Activated naive CD4-positive, alpha-beta T cell treated with anti-CD3 and anti-CD28 coated beads for 36 hours (primary cell): ENCODE measurements at regions of chr1 and their contacts with region 1.

Region 1: GRCh38 chr1:66436378-66437145 is 97.4 kb upstream of the SGIP1 start:
- DNase-seq: peak; percentile 81
- H3K4me3 Mint-ChIP-seq: no peak overlapping the region
- H3K27ac Mint-ChIP-seq: no peak overlapping the region
- H3K4me1 Mint-ChIP-seq: peaks cover 40% of the 10 kb centered on the region
- H3K27me3 Mint-ChIP-seq: peaks cover 2% of the 10 kb centered on the region

Region 2: DNA sequence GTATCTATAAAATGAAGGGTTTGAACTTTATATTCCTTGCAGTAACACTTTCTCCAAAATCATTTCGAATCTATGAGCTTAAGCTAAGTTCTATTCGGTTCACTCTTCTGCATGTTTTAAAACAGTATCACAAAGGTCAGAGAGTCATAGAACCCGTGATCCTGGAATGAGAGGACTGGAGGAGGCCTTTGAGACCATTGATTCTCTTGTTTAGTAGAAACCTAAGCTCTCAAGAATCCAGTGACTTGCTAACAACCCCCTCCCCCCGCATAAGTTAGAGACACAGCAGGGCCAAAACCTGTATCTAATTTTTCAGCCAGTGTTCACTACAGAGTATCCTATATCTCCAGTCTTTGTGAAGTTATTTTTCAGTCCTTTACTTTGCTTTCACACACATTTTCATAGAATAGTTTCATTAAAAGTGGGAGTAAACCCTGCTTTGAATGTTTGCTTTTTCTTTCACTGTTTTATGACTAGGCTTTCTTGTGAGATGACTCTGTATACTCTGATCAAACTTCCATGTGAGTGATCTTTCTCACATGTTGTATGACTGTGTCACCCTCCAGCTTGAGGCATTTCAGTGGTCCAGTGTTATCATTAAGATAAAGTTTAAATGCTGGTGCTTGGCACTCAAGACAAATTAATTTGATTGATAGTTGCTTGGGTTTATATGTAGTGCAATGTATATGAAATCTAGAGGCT is 178.0 kb before region 1 on chr1:
- CTCF ChIA-PET with region 1: interaction called, 474 read pairs
- intact Hi-C with region 1: loop called (anchors 1 kb)
- DNase-seq: peak; percentile 43
- H3K4me3 Mint-ChIP-seq: no peak overlapping the region
- H3K27ac Mint-ChIP-seq: peak overlapping the region; percentile 3
- H3K4me1 Mint-ChIP-seq: peaks cover 84% of the 10 kb centered on the region
- H3K27me3 Mint-ChIP-seq: no peaks in the 10 kb centered on the region

Region 3: GRCh38 chr1:66313429-66313828 is 123.1 kb before region 1 on chr1:
- CTCF ChIA-PET with region 1: no interaction called
- intact Hi-C with region 1: no loop called
- DNase-seq: no peak
- H3K4me3 Mint-ChIP-seq: no peak overlapping the region
- H3K27ac Mint-ChIP-seq: no peak overlapping the region
- H3K4me1 Mint-ChIP-seq: peaks cover 10% of the 10 kb centered on the region
- H3K27me3 Mint-ChIP-seq: no peaks in the 10 kb centered on the region

Region 4: DNA sequence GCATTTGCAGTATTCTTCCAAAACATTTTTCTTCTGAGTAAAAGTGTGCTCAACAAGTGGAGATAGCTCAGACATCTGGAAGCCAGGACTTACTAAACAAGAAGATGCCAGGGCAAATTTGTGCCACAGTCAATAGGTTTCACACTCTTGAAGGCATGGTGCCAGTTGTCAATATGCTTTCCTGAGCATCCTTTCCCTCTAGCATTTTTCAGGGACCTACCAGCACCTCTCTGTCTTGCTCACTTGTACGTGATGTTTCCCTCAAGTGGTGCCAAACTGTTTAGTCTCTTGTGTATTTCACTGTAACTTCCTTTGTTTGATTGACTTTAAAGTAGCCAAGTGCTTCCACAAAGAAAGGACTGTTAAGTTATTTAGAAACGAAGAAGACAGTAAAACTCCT is 96.6 kb before region 1 on chr1:
- CTCF ChIA-PET with region 1: interaction called, 17 read pairs
- intact Hi-C with region 1: no loop called
- DNase-seq: no peak
- H3K4me3 Mint-ChIP-seq: peak overlapping the region; percentile 65
- H3K27ac Mint-ChIP-seq: peak overlapping the region; percentile 82
- H3K4me1 Mint-ChIP-seq: peaks cover 67% of the 10 kb centered on the region
- H3K27me3 Mint-ChIP-seq: no peaks in the 10 kb centered on the region

Region 5: DNA sequence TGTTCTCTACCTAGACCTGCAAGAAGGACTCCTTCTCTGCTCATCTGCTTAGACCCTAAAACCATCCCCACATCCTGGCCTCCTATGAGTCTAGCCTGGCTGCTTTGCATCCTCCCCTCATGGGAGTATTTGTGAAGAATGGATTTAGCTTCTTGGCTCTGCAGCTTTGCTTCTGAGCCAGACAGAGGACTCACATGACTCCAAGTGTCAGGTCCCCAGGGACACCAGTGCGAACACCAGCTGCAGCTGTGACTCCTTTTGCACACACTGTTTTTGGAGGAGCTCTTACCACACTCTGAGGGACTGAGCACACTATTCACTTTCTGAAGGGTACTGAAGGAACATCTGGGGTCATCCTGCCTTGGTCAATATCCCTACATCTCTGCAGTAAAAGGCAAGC is 34.4 kb before region 1 on chr1:
- CTCF ChIA-PET with region 1: interaction called, 10 read pairs
- intact Hi-C with region 1: loop called (anchors 1 kb)
- DNase-seq: no peak
- H3K4me3 Mint-ChIP-seq: no peak overlapping the region
- H3K27ac Mint-ChIP-seq: no peak overlapping the region
- H3K4me1 Mint-ChIP-seq: peaks cover 32% of the 10 kb centered on the region
- H3K27me3 Mint-ChIP-seq: no peaks in the 10 kb centered on the region

Region 6: DNA sequence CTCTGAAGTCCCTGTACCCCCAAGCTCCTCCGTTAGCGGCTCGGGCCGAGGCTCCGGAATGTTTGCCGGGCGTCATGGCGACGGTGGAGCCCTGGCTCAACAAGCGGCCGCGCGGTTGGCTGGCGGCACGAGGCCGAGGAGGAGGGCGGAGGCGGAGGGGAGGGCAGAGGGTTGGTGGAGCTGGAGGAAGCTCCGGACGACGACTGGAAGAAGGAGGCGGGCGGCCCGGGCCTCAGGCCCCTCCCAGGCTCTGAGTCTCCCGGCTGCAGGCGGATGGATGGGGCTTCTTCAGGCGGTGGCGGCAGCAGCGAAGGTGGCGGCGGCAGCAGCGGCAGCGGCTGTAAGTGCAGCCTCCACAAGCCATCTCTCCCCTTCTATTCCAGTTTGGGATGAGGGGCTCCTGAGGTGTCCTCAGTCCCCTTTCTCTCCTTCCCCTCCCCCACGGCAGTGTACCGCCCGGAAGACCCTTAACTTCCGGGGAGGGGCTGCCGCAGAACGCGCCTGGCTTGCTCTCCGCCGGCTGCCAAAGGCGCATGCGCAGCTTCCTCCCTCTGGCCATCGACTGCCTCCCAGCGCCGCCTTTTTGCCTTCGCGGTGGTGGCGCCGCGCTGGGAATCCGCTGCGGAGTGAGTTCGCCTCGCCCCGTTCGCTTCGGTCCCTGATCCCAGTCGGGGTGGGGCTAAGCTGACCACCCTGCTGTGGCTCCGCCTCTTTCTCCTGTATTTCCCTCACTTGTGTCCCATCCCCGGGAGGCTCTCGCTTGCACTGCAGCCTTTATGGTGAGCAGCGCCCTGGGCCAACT is 488.4 kb after region 1 on chr1 and contains the starts of genes DNAI4 and MIER1:
- CTCF ChIA-PET with region 1: no interaction called
- intact Hi-C with region 1: loop called (anchors 10 kb)
- DNase-seq: peak; percentile 98
- H3K4me3 Mint-ChIP-seq: peak within 1 kb of the TSS; percentile 92
- H3K27ac Mint-ChIP-seq: peak within 1 kb of the TSS; percentile 95
- H3K4me1 Mint-ChIP-seq: peaks cover 50% of the 10 kb centered on the region
- H3K27me3 Mint-ChIP-seq: no peaks in the 10 kb centered on the region
- total RNA-seq, gene DNAI4: 0.83 to 1.5 TPM
- total RNA-seq, gene MIER1: 56.5 to 58.3 TPM